CD8-positive, alpha-beta memory T cell (primary cell): ENCODE measurements at regions of chr14 and their contacts with region 1.

Region 1: DNA sequence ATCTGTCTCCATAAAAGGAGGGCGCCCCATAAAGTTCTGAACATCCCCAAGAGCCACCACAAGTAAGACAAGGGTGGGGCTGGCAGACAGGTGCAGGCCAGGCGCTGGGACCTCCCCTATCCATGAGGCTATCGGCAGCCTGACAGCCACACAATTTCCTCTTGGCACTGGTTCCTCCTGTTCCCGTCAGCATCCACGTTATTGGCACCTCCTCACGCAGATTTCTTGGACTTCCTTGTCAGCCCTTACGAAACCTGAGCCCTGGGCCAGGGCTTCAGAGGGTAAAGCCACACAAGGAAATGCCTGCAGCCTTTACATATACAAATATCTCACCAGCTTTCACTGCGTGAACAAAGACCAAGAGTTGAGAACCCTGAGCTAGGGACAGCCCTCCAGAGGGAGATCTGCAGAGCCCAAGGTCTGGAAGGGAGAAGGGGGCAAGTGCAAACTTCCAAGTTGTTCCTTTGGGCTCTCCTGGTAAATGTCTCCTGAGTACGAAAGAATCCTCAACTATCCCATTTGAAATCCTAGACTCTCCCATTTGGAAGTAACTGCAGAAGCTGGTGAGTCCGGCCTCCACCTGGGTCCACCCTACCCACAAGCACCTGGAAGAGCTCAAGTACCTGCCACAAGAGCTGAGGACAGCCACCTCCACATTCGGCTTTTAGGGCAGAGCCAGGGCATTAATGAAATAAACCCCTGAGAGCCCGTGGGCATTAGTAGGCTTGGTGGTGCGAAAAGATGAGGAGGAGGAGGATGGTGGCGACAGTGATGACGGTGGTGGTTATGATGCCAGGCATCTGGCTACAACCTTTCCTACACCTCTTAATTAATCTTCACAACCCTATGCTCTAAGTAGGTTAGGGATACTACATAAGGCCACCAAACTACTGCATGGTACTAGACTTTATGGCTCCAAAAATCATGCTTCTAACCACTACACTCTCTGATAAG is 5.5 kb upstream of the TC2N start:
- DNase-seq: peak; percentile 53 to 83 (median 76)
- H3K4me3 ChIP-seq: peak overlapping the region; percentile 85
- H3K4me3 Mint-ChIP-seq: peak overlapping the region; percentile 69 to 91 (median 80)
- H3K27ac ChIP-seq: peak overlapping the region; percentile 68
- H3K27ac Mint-ChIP-seq: peak overlapping the region; percentile 80 to 100 (median 98)
- H3K4me1 ChIP-seq: peaks cover 98% of the 10 kb centered on the region
- H3K4me1 Mint-ChIP-seq: peaks cover 90 to 100% (median 100%) of the 10 kb centered on the region in 3 donors
- H3K27me3 ChIP-seq: no peaks in the 10 kb centered on the region
- H3K27me3 Mint-ChIP-seq: peaks cover 0 to 2% of the 10 kb centered on the region in 2 donors

Region 2: DNA sequence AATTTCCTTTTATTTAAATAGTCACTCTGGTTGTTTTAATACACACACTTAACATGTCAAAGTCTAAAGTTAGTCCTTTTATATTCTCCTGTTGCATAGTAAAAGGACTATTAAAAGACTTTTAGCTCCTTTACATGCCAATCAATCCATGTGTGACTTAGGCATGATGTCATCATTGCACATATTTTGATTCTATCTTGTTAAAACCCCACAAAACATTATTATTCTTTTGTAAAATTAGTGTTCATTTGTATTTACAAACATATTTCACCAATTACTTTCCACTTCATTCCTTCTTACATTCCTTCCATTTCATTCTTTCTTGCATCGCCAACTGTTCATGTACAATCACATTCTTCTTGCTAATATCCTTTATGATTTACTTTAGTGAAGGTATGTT is 45.0 kb before region 1 on chr14:
- CTCF ChIA-PET with region 1: no interaction called
- POLR2A ChIA-PET with region 1: no interaction called
- DNase-seq: no peak
- H3K4me3 ChIP-seq: no peak overlapping the region
- H3K4me3 Mint-ChIP-seq: no peak overlapping the region
- H3K27ac ChIP-seq: no peak overlapping the region
- H3K27ac Mint-ChIP-seq: peak overlapping the region in 4 of 8 donors; percentile 5 to 69 (median 20)
- H3K4me1 ChIP-seq: peaks cover 32% of the 10 kb centered on the region
- H3K4me1 Mint-ChIP-seq: peaks cover 64 to 90% (median 77%) of the 10 kb centered on the region in 3 donors
- H3K27me3 ChIP-seq: no peaks in the 10 kb centered on the region
- H3K27me3 Mint-ChIP-seq: no peaks in the 10 kb centered on the region

Region 3: GRCh38 chr14:91858215-91858905 is 14.4 kb before region 1 on chr14:
- CTCF ChIA-PET with region 1: interaction called, 9 read pairs
- POLR2A ChIA-PET with region 1: interaction called, 22 read pairs
- DNase-seq: no peak
- H3K4me3 ChIP-seq: no peak overlapping the region
- H3K4me3 Mint-ChIP-seq: peak overlapping the region; percentile 37 to 75 (median 59)
- H3K27ac ChIP-seq: no peak overlapping the region
- H3K27ac Mint-ChIP-seq: peak overlapping the region; percentile 83 to 99 (median 91)
- H3K4me1 ChIP-seq: peaks cover 98% of the 10 kb centered on the region
- H3K4me1 Mint-ChIP-seq: peaks cover 89 to 99% (median 97%) of the 10 kb centered on the region in 3 donors
- H3K27me3 ChIP-seq: no peaks in the 10 kb centered on the region
- H3K27me3 Mint-ChIP-seq: no peaks in the 10 kb centered on the region

Region 4: GRCh38 chr14:91899212-91899611 is 26.4 kb after region 1 on chr14:
- CTCF ChIA-PET with region 1: interaction called, 11 read pairs
- POLR2A ChIA-PET with region 1: interaction called, 3 read pairs
- DNase-seq: peak in 1 of 5 donors; percentile 17
- H3K4me3 ChIP-seq: no peak overlapping the region
- H3K4me3 Mint-ChIP-seq: no peak overlapping the region
- H3K27ac ChIP-seq: no peak overlapping the region
- H3K27ac Mint-ChIP-seq: peak overlapping the region in 1 of 8 donors; percentile 17
- H3K4me1 ChIP-seq: peaks cover 3% of the 10 kb centered on the region
- H3K4me1 Mint-ChIP-seq: peaks cover 5 to 21% (median 9%) of the 10 kb centered on the region in 3 donors
- H3K27me3 ChIP-seq: no peaks in the 10 kb centered on the region
- H3K27me3 Mint-ChIP-seq: no peaks in the 10 kb centered on the region

Region 5: GRCh38 chr14:91911474-91912032 is 38.8 kb after region 1 on chr14:
- CTCF ChIA-PET with region 1: interaction called, 13 read pairs
- POLR2A ChIA-PET with region 1: no interaction called
- DNase-seq: peak in 4 of 5 donors; percentile 28 to 66 (median 52)
- H3K4me3 ChIP-seq: no peak overlapping the region
- H3K4me3 Mint-ChIP-seq: no peak overlapping the region
- H3K27ac ChIP-seq: no peak overlapping the region
- H3K27ac Mint-ChIP-seq: peak overlapping the region in 3 of 8 donors; percentile 37 to 83 (median 77)
- H3K4me1 ChIP-seq: peaks cover 5% of the 10 kb centered on the region
- H3K4me1 Mint-ChIP-seq: peaks cover 19 to 35% (median 23%) of the 10 kb centered on the region in 3 donors
- H3K27me3 ChIP-seq: no peaks in the 10 kb centered on the region
- H3K27me3 Mint-ChIP-seq: peaks cover 0 to 3% of the 10 kb centered on the region in 2 donors

Region 6: GRCh38 chr14:91985521-91986255 is 112.9 kb after region 1 on chr14:
- CTCF ChIA-PET with region 1: no interaction called
- POLR2A ChIA-PET with region 1: no interaction called
- DNase-seq: no peak
- H3K4me3 ChIP-seq: no peak overlapping the region
- H3K4me3 Mint-ChIP-seq: no peak overlapping the region
- H3K27ac ChIP-seq: no peak overlapping the region
- H3K27ac Mint-ChIP-seq: peak overlapping the region in 2 of 8 donors; percentile 33 to 54
- H3K4me1 ChIP-seq: no peaks in the 10 kb centered on the region
- H3K4me1 Mint-ChIP-seq: peaks cover 10 to 16% (median 13%) of the 10 kb centered on the region in 3 donors
- H3K27me3 ChIP-seq: no peaks in the 10 kb centered on the region
- H3K27me3 Mint-ChIP-seq: no peaks in the 10 kb centered on the region